H1 (cell line): ENCODE measurements at regions of chr2 and their contacts with region 1.

Region 1: GRCh38 chr2:153405196-153405595 is 73.4 kb downstream of the RPRM start:
- DNase-seq: no peak
- H3K4me3 ChIP-seq: peak overlapping the region in 1 of 4 experiments; percentile 56; a peak in 2 of 8 replicates
- H3K27ac ChIP-seq: no peak overlapping the region
- H3K4me1 ChIP-seq: peaks cover 0 to 17% (median 6%) of the 10 kb centered on the region in 4 experiments; a peak in 5 of 7 replicates
- H3K27me3 ChIP-seq: no peaks in the 10 kb centered on the region
- CTCF ChIP-seq: no peak
- EP300 ChIP-seq: no peak
- POLR2A ChIP-seq: no peak
- RAD21 ChIP-seq: no peak

Region 2: GRCh38 chr2:153106802-153107477 is 298.3 kb before region 1 on chr2:
- CTCF ChIA-PET with region 1: no interaction called
- POLR2A ChIA-PET with region 1: no interaction called
- DNase-seq: no peak
- H3K4me3 ChIP-seq: no peak overlapping the region
- H3K27ac ChIP-seq: no peak overlapping the region
- H3K4me1 ChIP-seq: no peaks in the 10 kb centered on the region
- H3K27me3 ChIP-seq: no peaks in the 10 kb centered on the region
- CTCF ChIP-seq: no peak
- EP300 ChIP-seq: no peak
- POLR2A ChIP-seq: no peak
- RAD21 ChIP-seq: no peak

Region 3: DNA sequence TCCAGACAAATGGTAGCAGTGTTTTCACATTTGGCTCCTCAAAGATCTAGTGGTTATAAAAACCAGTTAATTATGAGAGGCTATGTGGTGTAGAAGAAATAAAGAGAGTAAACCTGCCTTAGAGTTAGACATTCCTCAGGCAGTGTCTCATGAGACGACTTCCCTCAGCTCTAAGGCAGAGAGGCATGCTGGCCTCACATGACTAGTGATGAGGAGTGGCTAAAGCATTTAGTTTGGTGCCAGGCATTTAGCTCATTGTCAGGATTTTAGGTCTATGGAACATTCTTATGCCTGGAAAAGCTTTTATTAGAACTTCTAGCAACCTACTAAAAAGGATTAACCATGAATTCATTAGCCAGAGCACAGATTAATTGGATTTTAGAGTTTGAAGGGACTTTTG is 16.9 kb before region 1 on chr2:
- CTCF ChIA-PET with region 1: interaction called, 7 read pairs
- POLR2A ChIA-PET with region 1: interaction called, 10 read pairs
- DNase-seq: no peak
- H3K4me3 ChIP-seq: no peak overlapping the region
- H3K27ac ChIP-seq: no peak overlapping the region
- H3K4me1 ChIP-seq: peaks cover 0 to 7% (median 4%) of the 10 kb centered on the region in 4 experiments; a peak in 4 of 7 replicates
- H3K27me3 ChIP-seq: no peaks in the 10 kb centered on the region
- CTCF ChIP-seq: no peak
- EP300 ChIP-seq: no peak
- POLR2A ChIP-seq: no peak
- RAD21 ChIP-seq: no peak